CD8-positive, alpha-beta T cell (primary cell): ENCODE measurements at regions of chr3 and their contacts with region 1.

Region 1: DNA sequence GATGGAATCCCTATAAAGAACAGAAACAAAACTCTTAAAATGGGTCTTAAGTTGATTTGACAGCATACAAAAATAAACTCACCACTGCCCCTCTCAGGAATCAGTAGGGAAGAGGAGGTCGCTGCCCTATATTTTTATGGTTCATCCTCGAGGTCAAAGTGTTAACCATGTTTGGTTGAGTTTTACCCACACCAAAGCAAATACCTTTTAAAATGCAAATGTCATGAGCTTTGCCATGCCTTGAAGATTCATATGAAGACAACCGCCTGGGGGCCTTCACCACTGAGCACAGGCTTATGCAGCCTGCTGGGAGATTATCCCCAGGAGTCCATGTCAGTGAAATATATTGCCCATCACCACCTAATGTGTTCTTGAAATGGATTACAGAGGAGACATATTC is 66.1 kb downstream of the GLB1 start:
- DNase-seq: peak in 3 of 9 experiments; percentile 33 to 70 (median 61)
- ATAC-seq: peak; percentile 85
- H3K4me3 ChIP-seq: no peak overlapping the region
- H3K4me3 Mint-ChIP-seq: no peak overlapping the region
- H3K27ac ChIP-seq: no peak overlapping the region
- H3K27ac Mint-ChIP-seq: no peak overlapping the region
- H3K4me1 ChIP-seq: no peaks in the 10 kb centered on the region
- H3K4me1 Mint-ChIP-seq: peaks cover 11% of the 10 kb centered on the region
- H3K27me3 ChIP-seq: no peaks in the 10 kb centered on the region
- H3K27me3 Mint-ChIP-seq: no peaks in the 10 kb centered on the region
- CTCF ChIP-seq: no peak

Region 2: DNA sequence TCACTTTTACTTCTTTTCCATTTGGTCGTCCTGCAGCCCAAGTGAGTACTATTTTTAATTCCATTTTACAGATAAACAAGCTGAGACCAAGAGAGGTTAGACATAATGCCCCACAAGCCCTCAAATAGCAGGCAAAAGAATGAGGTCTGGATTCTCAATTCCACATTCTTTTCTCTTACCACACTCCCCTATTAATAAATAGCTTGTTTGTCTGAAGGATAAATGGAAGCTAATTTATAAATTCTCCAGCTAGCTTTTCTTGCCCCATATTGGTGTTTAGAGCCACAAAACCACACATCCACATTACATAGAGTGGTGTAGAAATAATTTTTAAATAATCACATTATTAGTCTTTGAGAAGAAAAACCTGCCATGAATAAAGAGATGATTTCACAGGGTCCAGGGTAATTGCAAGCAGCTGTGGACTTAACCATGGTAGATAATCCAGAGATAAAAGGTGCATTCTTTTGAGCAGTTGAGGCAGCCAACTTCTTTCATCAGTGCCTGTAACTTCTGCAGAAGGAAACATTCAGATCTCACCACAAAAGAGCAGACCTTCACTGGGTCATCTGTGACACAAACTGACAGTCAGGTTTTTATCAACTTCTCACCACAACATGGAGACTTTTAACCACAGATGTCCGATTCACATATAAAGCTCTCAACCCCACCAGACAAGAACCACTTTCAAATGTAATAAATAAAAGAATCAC is 1811.5 kb before region 1 on chr3:
- CTCF ChIA-PET with region 1: no interaction called
- POLR2A ChIA-PET with region 1: no interaction called
- intact Hi-C with region 1: no loop called
- DNase-seq: no peak
- ATAC-seq: no peak
- H3K4me3 ChIP-seq: no peak overlapping the region
- H3K4me3 Mint-ChIP-seq: no peak overlapping the region
- H3K27ac ChIP-seq: no peak overlapping the region
- H3K27ac Mint-ChIP-seq: no peak overlapping the region
- H3K4me1 ChIP-seq: peaks cover 57% of the 10 kb centered on the region
- H3K4me1 Mint-ChIP-seq: peaks cover 91% of the 10 kb centered on the region
- H3K27me3 ChIP-seq: no peaks in the 10 kb centered on the region
- H3K27me3 Mint-ChIP-seq: no peaks in the 10 kb centered on the region
- CTCF ChIP-seq: no peak

Region 3: DNA sequence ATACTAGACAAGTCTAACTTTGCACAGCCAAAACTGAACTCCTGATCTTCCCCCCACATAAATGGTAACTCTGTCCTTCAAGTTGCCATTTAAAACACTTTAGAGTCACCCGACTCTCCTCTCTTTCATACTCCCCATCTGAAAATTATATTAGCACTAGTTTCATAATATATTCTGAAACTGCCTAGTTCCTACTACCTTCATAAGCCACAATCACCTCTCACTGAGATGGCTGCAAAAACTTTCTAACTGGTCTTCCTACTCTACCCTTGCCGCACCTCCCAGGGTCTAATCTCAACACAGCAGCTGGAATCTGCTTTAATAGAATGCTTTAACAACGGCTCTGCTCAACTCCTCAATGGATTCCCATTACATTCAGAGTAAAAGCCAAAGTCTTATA is 11.1 kb after region 1 on chr3:
- CTCF ChIA-PET with region 1: interaction called, 12 read pairs
- POLR2A ChIA-PET with region 1: interaction called, 6 read pairs
- intact Hi-C with region 1: loop called in 1 of 2 experiments (anchors 2 kb)
- DNase-seq: no peak
- ATAC-seq: no peak
- H3K4me3 ChIP-seq: no peak overlapping the region
- H3K4me3 Mint-ChIP-seq: no peak overlapping the region
- H3K27ac ChIP-seq: no peak overlapping the region
- H3K27ac Mint-ChIP-seq: no peak overlapping the region
- H3K4me1 ChIP-seq: peaks cover 33% of the 10 kb centered on the region
- H3K4me1 Mint-ChIP-seq: peaks cover 39% of the 10 kb centered on the region
- H3K27me3 ChIP-seq: no peaks in the 10 kb centered on the region
- H3K27me3 Mint-ChIP-seq: no peaks in the 10 kb centered on the region
- CTCF ChIP-seq: no peak

Region 4: DNA sequence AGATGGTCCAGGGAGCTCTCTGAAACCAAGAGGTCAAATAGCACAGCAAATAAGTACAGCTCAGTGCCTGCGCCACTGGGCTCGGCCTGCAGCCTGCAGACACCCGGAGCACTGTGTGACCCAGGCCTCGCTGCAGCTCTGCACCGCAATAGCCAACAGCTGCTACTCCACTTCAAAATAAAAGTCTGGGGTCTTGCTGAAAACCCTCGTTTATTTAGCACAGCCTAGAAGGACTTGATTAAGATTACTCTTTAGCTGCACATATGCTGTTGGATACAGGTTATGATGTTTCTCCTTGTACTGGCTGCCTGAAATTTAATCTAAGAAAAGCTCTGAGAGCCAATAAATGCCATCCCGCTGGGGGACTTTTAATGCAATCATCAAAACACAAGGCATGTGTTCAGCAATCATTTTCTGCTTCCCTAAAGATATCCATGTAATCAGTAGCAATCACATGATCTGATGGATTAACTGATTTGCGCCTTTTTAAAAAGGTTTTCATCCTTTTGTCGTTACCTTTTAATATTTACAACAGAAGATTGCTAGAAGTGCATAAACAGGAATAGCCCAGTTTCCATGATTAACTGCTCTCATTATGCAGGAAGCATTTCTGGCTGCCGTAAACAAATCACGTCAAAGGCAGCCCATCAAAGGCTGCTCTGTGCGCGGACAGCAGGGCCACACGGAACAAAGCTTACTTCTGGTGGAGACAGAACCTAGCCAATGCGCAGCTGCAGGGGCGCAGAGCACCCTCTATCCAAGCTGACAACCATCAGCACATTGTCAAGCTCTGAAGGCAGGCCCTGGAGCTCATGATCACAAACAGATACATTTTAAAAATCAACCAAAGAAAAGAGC is 628.4 kb after region 1 on chr3:
- CTCF ChIA-PET with region 1: no interaction called
- POLR2A ChIA-PET with region 1: no interaction called
- intact Hi-C with region 1: no loop called
- DNase-seq: peak in 7 of 9 experiments; percentile 3 to 77 (median 53)
- ATAC-seq: peak; percentile 93
- H3K4me3 ChIP-seq: peak overlapping the region; percentile 36 to 40
- H3K4me3 Mint-ChIP-seq: peak overlapping the region; percentile 79
- H3K27ac ChIP-seq: peak overlapping the region in 1 of 2 experiments; percentile 34
- H3K27ac Mint-ChIP-seq: peak overlapping the region; percentile 76
- H3K4me1 ChIP-seq: peaks cover 21% of the 10 kb centered on the region
- H3K4me1 Mint-ChIP-seq: peaks cover 44% of the 10 kb centered on the region
- H3K27me3 ChIP-seq: no peaks in the 10 kb centered on the region
- H3K27me3 Mint-ChIP-seq: no peaks in the 10 kb centered on the region
- CTCF ChIP-seq: no peak